ENCODE measurements at regions of chr1 and their contacts with region 1.

Region 1: GRCh38 chr1:37946703-37947360 is at the start of gene INPP5B:
- DNase-seq: peak; percentile 83
- H3K4me3 ChIP-seq: peak within 1 kb of the TSS; percentile 42 to 52 (median 49)
- H3K27ac ChIP-seq: peak within 1 kb of the TSS; percentile 93
- H3K4me1 ChIP-seq: peaks cover 12% of the 10 kb centered on the region
- H3K27me3 ChIP-seq: no peaks in the 10 kb centered on the region
- CTCF ChIP-seq: no peak
- POLR2A ChIP-seq: peak; percentile 13
- total RNA-seq, gene INPP5B: 13.5 and 14.7 TPM in 2 replicates

Region 2: GRCh38 chr1:37851782-37852210 is 95.0 kb before region 1 on chr1:
- CTCF ChIA-PET with region 1: no interaction called
- POLR2A ChIA-PET with region 1: no interaction called
- dilution Hi-C with region 1: no loop called
- intact Hi-C with region 1: no loop called
- DNase-seq: peak; percentile 18
- H3K4me3 ChIP-seq: no peak overlapping the region
- H3K27ac ChIP-seq: no peak overlapping the region
- H3K4me1 ChIP-seq: peaks cover 14% of the 10 kb centered on the region
- H3K27me3 ChIP-seq: no peaks in the 10 kb centered on the region
- CTCF ChIP-seq: no peak
- POLR2A ChIP-seq: no peak

Region 3: GRCh38 chr1:37931361-37932158 is 15.3 kb before region 1 on chr1:
- CTCF ChIA-PET with region 1: interaction called, 4 read pairs
- POLR2A ChIA-PET with region 1: no interaction called
- dilution Hi-C with region 1: no loop called
- intact Hi-C with region 1: loop called (anchors 1 kb)
- DNase-seq: peak; percentile 98
- H3K4me3 ChIP-seq: peak overlapping the region; percentile 72 to 78 (median 74)
- H3K27ac ChIP-seq: peak overlapping the region; percentile 29
- H3K4me1 ChIP-seq: peaks cover 10% of the 10 kb centered on the region
- H3K27me3 ChIP-seq: no peaks in the 10 kb centered on the region
- CTCF ChIP-seq: no peak
- POLR2A ChIP-seq: no peak

Measured in endothelial cell of umbilical vein (primary cell).